ENCODE measurements at regions of chr16 and their contacts with region 1.

Region 1: GRCh38 chr16:73161977-73162376 is 114.0 kb upstream of the ZFHX3 start:
- DNase-seq: no peak
- H3K4me3 ChIP-seq: no peak overlapping the region
- H3K27ac ChIP-seq: no peak overlapping the region
- H3K4me1 ChIP-seq: peaks cover 0 to 3% (median 2%) of the 10 kb centered on the region in 3 donors
- H3K27me3 ChIP-seq: no peaks in the 10 kb centered on the region
- CTCF ChIP-seq: no peak

Region 2: GRCh38 chr16:72942021-72942420 is 220.0 kb before region 1 on chr16:
- intact Hi-C with region 1: loop called (anchors 5 kb)
- DNase-seq: no peak
- H3K4me3 ChIP-seq: no peak overlapping the region
- H3K27ac ChIP-seq: no peak overlapping the region
- H3K4me1 ChIP-seq: peaks cover 2 to 10% (median 6%) of the 10 kb centered on the region in 3 donors
- H3K27me3 ChIP-seq: no peaks in the 10 kb centered on the region
- CTCF ChIP-seq: no peak